ENCODE measurements at regions of chr14 and their contacts with region 1.

Region 1: DNA sequence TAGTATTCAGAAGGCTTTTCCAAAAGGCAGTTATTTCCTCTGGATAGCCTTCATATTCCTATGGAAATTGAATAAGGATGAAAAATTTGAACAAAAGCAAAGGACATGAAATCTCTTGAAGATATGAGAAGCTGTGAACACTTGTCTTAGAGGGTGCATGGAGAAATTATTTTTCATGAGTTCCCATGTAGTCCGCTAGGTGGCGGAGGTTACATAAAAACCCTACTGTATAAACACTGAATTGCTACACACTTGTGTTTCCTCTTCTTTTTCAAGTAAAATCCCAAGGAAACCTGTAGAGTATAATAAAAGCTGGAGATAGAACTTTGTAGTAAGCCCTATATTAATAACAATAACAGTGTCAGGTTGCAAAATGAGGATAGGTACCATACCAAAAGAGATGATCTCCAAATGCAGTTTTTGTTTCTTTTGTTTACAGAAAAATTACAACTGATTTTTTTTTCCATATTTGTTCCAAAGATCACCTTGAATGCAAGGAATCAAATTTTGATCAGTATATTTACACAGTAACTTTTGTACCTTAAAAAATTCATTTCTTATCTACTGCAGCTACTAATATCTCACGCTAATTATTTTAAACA is 37.8 kb upstream of the OR4E1 start:
- DNase-seq: no peak
- H3K4me3 Mint-ChIP-seq: peak overlapping the region; percentile 57
- H3K27ac Mint-ChIP-seq: peak overlapping the region; percentile 61
- H3K4me1 Mint-ChIP-seq: peaks cover 2% of the 10 kb centered on the region
- H3K27me3 Mint-ChIP-seq: peaks cover 33% of the 10 kb centered on the region

Region 2: GRCh38 chr14:21734457-21735074 is 23.1 kb after region 1 on chr14:
- CTCF ChIA-PET with region 1: interaction called, 13 read pairs
- POLR2A ChIA-PET with region 1: no interaction called
- DNase-seq: no peak
- H3K4me3 Mint-ChIP-seq: peak overlapping the region; percentile 36
- H3K27ac Mint-ChIP-seq: no peak overlapping the region
- H3K4me1 Mint-ChIP-seq: peaks cover 12% of the 10 kb centered on the region
- H3K27me3 Mint-ChIP-seq: peaks cover 54% of the 10 kb centered on the region

Region 3: DNA sequence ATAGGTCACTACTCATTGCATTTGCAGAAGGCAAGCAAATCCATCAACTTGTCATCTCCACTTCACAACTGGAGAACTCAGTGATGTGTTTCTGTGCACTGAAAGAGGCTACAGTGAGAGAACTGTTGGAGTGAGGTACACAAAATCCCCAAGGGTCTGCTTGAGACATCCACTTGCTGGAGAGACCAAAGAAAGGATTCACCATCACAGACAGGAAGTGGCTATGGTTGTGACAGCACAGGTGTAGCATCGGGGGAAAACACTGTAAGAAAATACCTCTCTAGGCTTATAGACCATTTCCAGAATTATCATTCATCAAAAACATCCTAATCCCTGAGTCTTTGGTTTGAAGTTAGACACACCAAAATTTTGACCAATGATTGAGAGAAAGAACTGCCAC is 163.5 kb after region 1 on chr14:
- CTCF ChIA-PET with region 1: no interaction called
- POLR2A ChIA-PET with region 1: no interaction called
- DNase-seq: no peak
- H3K4me3 Mint-ChIP-seq: peak overlapping the region; percentile 35
- H3K27ac Mint-ChIP-seq: peak overlapping the region; percentile 76
- H3K4me1 Mint-ChIP-seq: peaks cover 27% of the 10 kb centered on the region
- H3K27me3 Mint-ChIP-seq: peaks cover 2% of the 10 kb centered on the region